Cardiac septum (tissue), 1 donor: ENCODE measurements at regions of chr9 and their contacts with region 1.

Region 1: GRCh38 chr9:98906262-98907040 is 37.3 kb upstream of the COL15A1 start:
- DNase-seq: no peak

Region 2: DNA sequence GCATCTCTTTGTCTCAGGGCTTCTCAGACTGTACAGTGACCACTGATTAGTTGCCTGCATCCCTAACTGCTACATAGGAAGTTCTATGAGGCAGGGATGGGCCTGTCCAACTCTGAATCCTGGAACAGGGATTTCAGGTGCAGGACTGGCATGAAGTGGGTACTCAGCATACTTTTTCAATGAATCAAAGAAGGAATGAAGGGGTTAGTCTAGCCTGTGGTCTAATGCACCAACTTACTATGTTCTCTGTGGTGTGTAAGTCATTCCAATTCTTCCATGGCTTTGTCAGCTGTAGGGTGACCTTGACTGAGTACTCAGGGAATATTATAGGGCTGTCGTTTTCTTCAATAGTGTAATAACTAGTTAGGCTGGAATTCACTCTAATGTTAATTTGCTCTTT is 45.5 kb after region 1 on chr9:
- intact Hi-C with region 1: no loop called
- DNase-seq: no peak

Region 3: GRCh38 chr9:98989036-98990000 is 82.9 kb after region 1 on chr9:
- intact Hi-C with region 1: loop called (anchors 5 kb)
- DNase-seq: peak; percentile 87